ENCODE measurements at regions of chr15 and their contacts with region 1.

Region 1: GRCh38 chr15:31128919-31129768 is 27.6 kb upstream of the TRPM1 start:
- DNase-seq: peak; percentile 61
- H3K4me3 Mint-ChIP-seq: no peak overlapping the region
- H3K27ac Mint-ChIP-seq: no peak overlapping the region
- H3K4me1 Mint-ChIP-seq: no peaks in the 10 kb centered on the region
- H3K27me3 Mint-ChIP-seq: no peaks in the 10 kb centered on the region
- CTCF ChIP-seq: peak; percentile 92

Region 2: GRCh38 chr15:30859091-30859874 is 269.9 kb before region 1 on chr15:
- CTCF ChIA-PET with region 1: interaction called, 12 read pairs
- POLR2A ChIA-PET with region 1: interaction called, 3 read pairs
- intact Hi-C with region 1: no loop called
- DNase-seq: peak; percentile 35
- H3K4me3 Mint-ChIP-seq: no peak overlapping the region
- H3K27ac Mint-ChIP-seq: no peak overlapping the region
- H3K4me1 Mint-ChIP-seq: no peaks in the 10 kb centered on the region
- H3K27me3 Mint-ChIP-seq: no peaks in the 10 kb centered on the region
- CTCF ChIP-seq: peak; percentile 47

Region 3: DNA sequence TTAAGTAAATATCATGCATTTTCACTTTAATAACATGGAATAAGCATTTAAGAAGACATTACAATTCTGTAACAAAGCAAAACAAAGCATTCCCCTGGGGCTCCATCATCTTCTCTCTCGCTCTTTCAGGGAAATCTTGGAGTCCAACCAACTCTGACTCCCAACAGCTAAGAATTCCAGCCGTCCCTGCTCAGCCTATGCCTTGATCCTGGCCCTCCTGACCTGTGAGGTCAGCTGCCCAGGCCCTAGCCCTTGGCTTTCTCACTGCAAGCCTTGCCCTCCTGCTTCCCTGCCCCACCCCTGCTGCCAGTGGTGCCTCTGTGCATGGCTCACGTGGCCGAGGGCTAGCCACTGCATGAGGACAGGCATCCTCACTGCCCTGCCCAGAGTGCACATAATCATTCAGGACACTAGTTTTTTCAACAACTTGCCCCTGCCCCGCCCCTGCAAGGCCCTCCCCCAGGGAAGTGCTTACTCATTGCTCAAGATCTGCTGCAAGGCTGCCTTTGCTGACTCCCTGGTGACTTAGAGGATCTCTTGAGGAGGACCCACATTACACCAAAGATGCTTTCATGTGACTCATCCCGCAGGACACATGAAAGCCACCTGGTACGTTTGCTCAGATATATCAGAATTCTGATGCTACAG is 175.3 kb before region 1 on chr15:
- CTCF ChIA-PET with region 1: interaction called, 3 read pairs
- POLR2A ChIA-PET with region 1: no interaction called
- intact Hi-C with region 1: loop called (anchors 5 kb)
- DNase-seq: peak; percentile 83
- H3K4me3 Mint-ChIP-seq: no peak overlapping the region
- H3K27ac Mint-ChIP-seq: no peak overlapping the region
- H3K4me1 Mint-ChIP-seq: peaks cover 12% of the 10 kb centered on the region
- H3K27me3 Mint-ChIP-seq: no peaks in the 10 kb centered on the region
- CTCF ChIP-seq: no peak

Region 4: DNA sequence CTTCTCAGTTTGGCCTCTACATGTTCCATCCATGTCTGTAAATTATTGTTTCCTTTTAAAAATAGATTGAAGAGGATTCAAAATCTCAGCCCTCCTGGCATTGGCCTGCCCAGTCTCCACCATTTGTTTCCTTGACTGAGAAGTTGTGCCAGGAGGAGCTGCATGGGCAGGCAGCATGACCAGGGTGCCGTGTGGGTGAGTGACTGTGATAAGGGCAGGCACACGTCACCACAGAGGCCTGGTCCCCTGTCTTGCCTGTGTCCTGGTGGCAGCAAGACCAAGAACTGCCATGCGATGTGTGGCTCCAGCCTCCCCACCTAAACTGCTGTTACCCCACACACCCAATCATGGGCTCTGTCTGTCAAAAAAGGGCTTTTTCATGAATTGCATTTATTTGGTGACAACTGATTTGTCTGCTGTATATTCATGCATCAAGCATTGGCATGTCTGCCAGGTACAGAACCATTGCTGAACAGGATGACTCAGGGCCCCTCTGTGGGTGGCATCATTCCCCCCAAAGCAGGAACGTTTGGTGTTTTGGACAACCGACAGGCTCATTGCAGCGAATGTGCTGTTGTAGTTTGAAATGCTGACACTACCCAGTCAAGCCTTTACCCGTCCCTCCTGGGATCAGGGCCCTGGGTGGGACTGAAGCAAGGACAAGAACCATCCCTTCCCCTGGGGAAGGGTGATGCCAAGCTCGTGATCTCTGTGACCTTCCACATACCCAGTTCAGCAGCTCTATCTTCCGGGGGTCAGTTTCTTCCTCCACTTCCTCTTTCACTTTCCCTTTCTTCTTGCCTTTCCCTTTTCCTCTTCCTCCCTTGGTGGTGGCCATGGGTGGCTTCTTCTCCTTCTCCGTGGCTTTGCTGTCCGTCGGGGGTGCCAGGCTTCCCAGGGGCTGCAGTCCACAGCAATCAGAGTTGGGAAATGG is 79.2 kb before region 1 on chr15:
- CTCF ChIA-PET with region 1: no interaction called
- POLR2A ChIA-PET with region 1: no interaction called
- intact Hi-C with region 1: no loop called
- DNase-seq: no peak
- H3K4me3 Mint-ChIP-seq: no peak overlapping the region
- H3K27ac Mint-ChIP-seq: no peak overlapping the region
- H3K4me1 Mint-ChIP-seq: no peaks in the 10 kb centered on the region
- H3K27me3 Mint-ChIP-seq: no peaks in the 10 kb centered on the region
- CTCF ChIP-seq: no peak

Region 5: GRCh38 chr15:31111091-31111647 is 18.0 kb before region 1 on chr15:
- CTCF ChIA-PET with region 1: interaction called, 43 read pairs
- POLR2A ChIA-PET with region 1: no interaction called
- intact Hi-C with region 1: no loop called
- DNase-seq: no peak
- H3K4me3 Mint-ChIP-seq: no peak overlapping the region
- H3K27ac Mint-ChIP-seq: no peak overlapping the region
- H3K4me1 Mint-ChIP-seq: no peaks in the 10 kb centered on the region
- H3K27me3 Mint-ChIP-seq: no peaks in the 10 kb centered on the region
- CTCF ChIP-seq: no peak

Region 6: DNA sequence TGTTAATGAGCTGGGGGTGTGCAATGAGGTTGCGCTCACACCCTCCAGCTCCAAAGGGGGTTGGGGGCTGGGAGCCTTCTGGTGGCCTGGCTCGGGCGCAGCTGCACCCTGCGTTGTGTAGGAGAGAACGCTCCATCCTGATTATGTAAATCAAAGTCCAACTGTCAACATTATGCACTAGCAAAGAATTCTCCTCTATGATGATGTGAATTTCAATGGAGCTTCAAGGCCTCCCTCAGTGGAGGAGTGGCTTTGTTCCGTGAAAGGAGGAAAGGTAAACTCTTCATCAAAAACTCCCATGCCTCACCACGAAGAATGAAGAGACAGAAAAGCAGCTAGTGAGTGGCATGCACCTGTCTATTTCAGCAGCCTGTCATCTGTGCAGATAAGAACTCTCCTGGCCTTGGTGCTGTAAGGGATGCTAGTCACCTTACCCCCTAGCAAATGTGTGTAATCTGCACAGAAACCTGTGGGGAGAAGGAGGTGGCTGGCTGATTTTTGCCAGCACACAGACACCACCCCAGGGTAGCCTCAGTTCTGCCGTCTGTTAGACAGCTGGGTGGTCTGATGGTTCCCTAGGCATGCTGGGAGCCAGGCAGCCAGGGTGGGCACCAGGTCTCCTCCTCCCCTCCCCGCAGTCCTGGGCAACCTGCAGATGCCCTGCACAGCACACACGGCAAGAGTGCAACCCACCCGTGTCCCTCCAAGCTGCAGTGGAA is 19.3 kb after region 1 on chr15:
- CTCF ChIA-PET with region 1: interaction called, 11 read pairs
- POLR2A ChIA-PET with region 1: no interaction called
- intact Hi-C with region 1: no loop called
- DNase-seq: no peak
- H3K4me3 Mint-ChIP-seq: no peak overlapping the region
- H3K27ac Mint-ChIP-seq: peak overlapping the region; percentile 13
- H3K4me1 Mint-ChIP-seq: peaks cover 6% of the 10 kb centered on the region
- H3K27me3 Mint-ChIP-seq: no peaks in the 10 kb centered on the region
- CTCF ChIP-seq: no peak

Region 7: GRCh38 chr15:31241888-31242522 is 112.9 kb after region 1 on chr15:
- CTCF ChIA-PET with region 1: no interaction called
- POLR2A ChIA-PET with region 1: no interaction called
- intact Hi-C with region 1: no loop called
- DNase-seq: no peak
- H3K4me3 Mint-ChIP-seq: no peak overlapping the region
- H3K27ac Mint-ChIP-seq: no peak overlapping the region
- H3K4me1 Mint-ChIP-seq: peaks cover 4% of the 10 kb centered on the region
- H3K27me3 Mint-ChIP-seq: no peaks in the 10 kb centered on the region
- CTCF ChIP-seq: no peak

Region 8: DNA sequence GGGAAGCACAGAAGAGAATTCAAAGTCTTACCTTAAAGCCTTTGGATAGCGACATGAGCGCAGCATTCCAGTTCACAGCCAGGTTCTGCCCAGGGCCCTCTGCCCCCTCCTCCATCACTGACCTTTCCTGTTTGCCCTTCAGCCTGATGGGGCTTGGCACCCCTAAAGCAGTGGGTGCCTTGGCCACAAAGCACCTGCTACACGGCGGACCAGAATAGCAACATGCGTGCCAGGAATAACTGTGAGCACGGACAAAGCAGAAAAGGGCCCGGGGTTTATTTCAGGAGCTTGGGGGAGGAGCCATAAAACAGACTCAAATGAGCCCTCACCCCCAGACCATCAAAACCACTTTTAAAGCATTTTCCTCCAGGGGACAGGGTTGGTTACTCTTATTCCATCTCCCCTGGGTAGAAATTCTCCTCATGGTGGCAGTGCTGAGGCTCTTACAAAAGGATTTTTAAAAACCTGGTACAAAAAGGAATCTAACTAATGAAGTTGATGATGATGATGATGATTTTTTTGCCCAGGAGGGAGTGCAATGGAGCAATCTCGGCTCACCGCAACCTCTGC is 332.9 kb after region 1 on chr15:
- CTCF ChIA-PET with region 1: no interaction called
- POLR2A ChIA-PET with region 1: no interaction called
- intact Hi-C with region 1: no loop called
- DNase-seq: no peak
- H3K4me3 Mint-ChIP-seq: no peak overlapping the region
- H3K27ac Mint-ChIP-seq: no peak overlapping the region
- H3K4me1 Mint-ChIP-seq: peaks cover 32% of the 10 kb centered on the region
- H3K27me3 Mint-ChIP-seq: no peaks in the 10 kb centered on the region
- CTCF ChIP-seq: no peak

Measured in MCF 10A (cell line).